ENCODE measurements at regions of chr3 and their contacts with region 1.

Region 1: GRCh38 chr3:146544002-146544928 is at the start of gene PLSCR1:
- DNase-seq: peak; percentile 90 to 96
- ATAC-seq: peak; percentile 93 to 97 (median 96)
- H3K4me3 ChIP-seq: peak within 1 kb of the TSS; percentile 43 to 90 (median 76)
- H3K27ac ChIP-seq: peak within 1 kb of the TSS; percentile 91 to 99 (median 96)
- H3K4me1 ChIP-seq: peaks cover 0 to 45% (median 32%) of the 10 kb centered on the region in 9 donors
- H3K27me3 ChIP-seq: no peaks in the 10 kb centered on the region
- CTCF ChIP-seq: no peak
- total RNA-seq, gene PLSCR1: 11.7 to 72.6 (median 22.5) TPM

Region 2: GRCh38 chr3:145727476-145727875 is 816.8 kb before region 1 on chr3:
- intact Hi-C with region 1: no loop called
- DNase-seq: no peak
- ATAC-seq: no peak
- H3K4me3 ChIP-seq: no peak overlapping the region
- H3K27ac ChIP-seq: no peak overlapping the region
- H3K4me1 ChIP-seq: no peaks in the 10 kb centered on the region
- H3K27me3 ChIP-seq: no peaks in the 10 kb centered on the region
- CTCF ChIP-seq: no peak

Region 3: GRCh38 chr3:146160964-146161662 is 383.2 kb before region 1 on chr3 and contains the start of gene PLOD2:
- intact Hi-C with region 1: loop called in 1 of 10 experiments (anchors 10 kb)
- DNase-seq: peak; percentile 72 to 82
- ATAC-seq: peak; percentile 72 to 95 (median 80)
- H3K4me3 ChIP-seq: peak within 1 kb of the TSS; percentile 61 to 88 (median 78)
- H3K27ac ChIP-seq: peak within 1 kb of the TSS; percentile 89 to 98 (median 94)
- H3K4me1 ChIP-seq: peaks cover 0 to 63% (median 44%) of the 10 kb centered on the region in 9 donors
- H3K27me3 ChIP-seq: peaks cover 0 to 32% (median 0%) of the 10 kb centered on the region in 7 donors
- CTCF ChIP-seq: no peak
- total RNA-seq, gene PLOD2: 12.5 to 44.6 (median 16.8) TPM

Region 4: DNA sequence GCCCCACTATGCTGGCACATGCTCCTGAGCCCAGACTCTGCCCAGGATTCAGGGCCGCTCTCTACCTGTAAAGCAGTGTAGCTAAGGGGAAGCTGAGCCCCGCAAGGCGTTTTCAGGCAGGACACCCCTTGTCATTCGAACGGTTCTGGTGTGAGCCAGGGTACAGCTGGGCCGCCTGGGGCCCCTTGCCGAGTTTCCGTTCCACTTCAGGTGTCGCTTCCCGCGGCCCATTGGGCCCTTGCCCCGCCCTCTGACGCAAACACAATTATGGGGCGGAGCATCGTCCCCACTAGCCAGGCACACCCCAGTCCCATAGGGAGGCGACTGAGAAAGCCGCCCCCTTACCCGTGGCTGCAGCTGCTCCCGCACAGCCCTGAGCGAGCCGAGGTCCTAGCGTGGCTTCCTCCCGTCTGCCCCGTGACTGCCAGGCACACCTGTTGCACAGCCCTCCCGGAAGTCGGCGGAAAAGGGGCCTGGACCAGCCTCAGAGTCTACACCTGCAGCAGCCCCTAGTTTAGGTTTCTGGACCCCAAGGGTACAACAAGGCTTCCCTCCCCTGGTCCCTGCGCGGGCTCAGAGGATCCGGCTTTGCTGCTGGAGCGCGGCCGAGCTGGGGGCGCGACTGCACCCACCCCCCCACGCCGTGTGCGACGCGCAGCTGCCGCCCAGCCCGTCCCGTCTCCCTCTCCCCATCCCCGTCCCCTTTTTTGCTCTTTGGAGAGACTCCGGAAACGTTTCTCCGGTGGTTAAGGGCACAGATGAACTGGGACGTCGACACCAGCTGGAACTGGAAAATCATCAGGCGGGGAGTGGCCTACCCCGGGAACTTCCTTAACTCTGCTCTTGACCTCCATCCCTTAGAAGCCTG is 74.9 kb before region 1 on chr3 and contains the start of gene PLSCR2:
- intact Hi-C with region 1: loop called in 1 of 10 experiments (anchors 10 kb)
- DNase-seq: peak; percentile 53 to 63
- ATAC-seq: peak; percentile 74 to 97 (median 90)
- H3K4me3 ChIP-seq: peak within 1 kb of the TSS; percentile 44 to 68 (median 60)
- H3K27ac ChIP-seq: peak within 1 kb of the TSS in 8 of 10 donors; percentile 22 to 86 (median 48)
- H3K4me1 ChIP-seq: peaks cover 0 to 18% (median 9%) of the 10 kb centered on the region in 9 donors
- H3K27me3 ChIP-seq: peaks cover 0 to 6% (median 0%) of the 10 kb centered on the region in 7 donors
- CTCF ChIP-seq: no peak
- total RNA-seq, gene PLSCR2: not detected

Region 5: DNA sequence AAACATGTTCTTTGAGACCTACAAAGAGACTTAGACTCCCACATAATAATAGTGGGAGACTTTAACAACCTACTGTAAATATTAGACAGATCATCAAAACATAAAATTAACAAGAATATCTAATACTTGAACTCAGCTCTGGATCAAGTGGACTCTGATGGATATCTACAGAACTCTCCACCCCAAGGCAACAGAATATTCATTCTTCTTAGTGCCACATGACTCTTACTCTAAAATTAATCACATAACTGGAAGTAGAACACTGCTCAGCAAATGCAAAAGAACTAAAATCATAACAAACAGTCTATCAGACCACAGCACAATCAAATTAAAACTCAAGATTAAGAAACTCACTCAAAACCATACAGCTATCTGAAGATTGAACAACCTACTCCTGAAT is 59.0 kb before region 1 on chr3:
- intact Hi-C with region 1: no loop called
- DNase-seq: no peak
- ATAC-seq: no peak
- H3K4me3 ChIP-seq: no peak overlapping the region
- H3K27ac ChIP-seq: no peak overlapping the region
- H3K4me1 ChIP-seq: no peaks in the 10 kb centered on the region
- H3K27me3 ChIP-seq: no peaks in the 10 kb centered on the region
- CTCF ChIP-seq: no peak

Region 6: GRCh38 chr3:146504498-146505197 is 39.6 kb before region 1 on chr3:
- intact Hi-C with region 1: loop called in 3 of 10 experiments (anchors 2 to 5 kb)
- DNase-seq: no peak
- ATAC-seq: no peak
- H3K4me3 ChIP-seq: no peak overlapping the region
- H3K27ac ChIP-seq: peak overlapping the region in 3 of 10 donors; percentile 7 to 48 (median 18)
- H3K4me1 ChIP-seq: peaks cover 4 to 44% (median 20%) of the 10 kb centered on the region in 9 donors
- H3K27me3 ChIP-seq: no peaks in the 10 kb centered on the region
- CTCF ChIP-seq: no peak

Region 7: DNA sequence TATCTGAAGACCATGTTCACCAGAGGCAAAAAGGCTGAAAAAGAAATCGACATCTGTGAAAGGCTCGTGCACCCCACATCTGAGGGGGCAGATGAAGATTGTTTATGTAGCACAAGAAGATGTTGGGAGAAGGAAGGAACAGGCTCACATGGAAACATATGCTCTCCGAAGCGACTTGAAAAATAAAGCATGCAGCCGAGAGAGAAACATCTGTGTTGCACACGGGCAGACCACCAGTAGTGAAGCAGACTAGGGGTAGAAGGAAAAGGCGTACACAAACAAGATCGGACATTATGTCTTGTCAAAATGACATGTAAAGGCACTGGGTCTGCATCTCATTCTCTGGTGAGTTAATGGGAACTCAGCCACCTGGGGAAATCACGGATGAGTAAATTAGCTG is 505.6 kb after region 1 on chr3:
- intact Hi-C with region 1: no loop called
- DNase-seq: no peak
- ATAC-seq: no peak
- H3K4me3 ChIP-seq: no peak overlapping the region
- H3K27ac ChIP-seq: no peak overlapping the region
- H3K4me1 ChIP-seq: no peaks in the 10 kb centered on the region
- H3K27me3 ChIP-seq: no peaks in the 10 kb centered on the region
- CTCF ChIP-seq: no peak